ENCODE measurements at regions of chr12 and their contacts with region 1.

Region 1: GRCh38 chr12:99800605-99801004 is 153.1 kb downstream of the GARIN6 start:
- DNase-seq: no peak
- H3K4me3 ChIP-seq: no peak overlapping the region
- H3K4me3 Mint-ChIP-seq: no peak overlapping the region
- H3K27ac Mint-ChIP-seq: no peak overlapping the region
- H3K4me1 ChIP-seq: no peaks in the 10 kb centered on the region
- H3K4me1 Mint-ChIP-seq: no peaks in the 10 kb centered on the region
- H3K27me3 ChIP-seq: no peaks in the 10 kb centered on the region
- H3K27me3 Mint-ChIP-seq: peaks cover 9% of the 10 kb centered on the region
- CTCF ChIP-seq: no peak

Region 2: DNA sequence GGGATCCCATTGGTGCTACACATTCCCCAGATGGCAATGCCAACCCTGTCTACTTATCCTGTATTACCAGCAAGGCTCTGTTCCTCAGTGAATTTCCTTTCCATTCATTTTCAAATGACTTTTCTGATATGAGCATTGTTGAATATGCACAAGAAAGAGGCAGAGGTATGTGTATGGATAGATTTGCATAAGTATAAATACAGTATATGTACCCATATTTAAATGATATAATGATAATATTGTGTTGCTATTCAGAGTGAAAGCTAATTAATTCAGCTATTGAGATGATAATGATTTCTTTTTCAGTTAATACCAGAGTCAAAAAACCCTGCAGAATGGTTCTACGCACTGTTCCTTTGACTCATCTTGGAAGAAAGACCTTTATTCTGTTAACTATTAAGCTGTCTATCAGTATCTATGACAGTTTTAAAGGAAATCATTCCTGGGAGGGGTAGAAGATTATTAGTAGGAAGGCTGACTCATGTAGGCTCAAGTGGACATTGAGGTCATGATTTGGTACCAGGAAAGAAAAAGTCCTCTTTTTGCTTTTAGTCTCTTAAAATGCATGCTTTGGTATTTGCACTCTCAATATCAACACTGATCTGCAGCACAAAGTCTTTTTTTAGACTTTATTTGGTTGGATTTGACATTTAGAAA is 728.0 kb after region 1 on chr12:
- CTCF ChIA-PET with region 1: interaction called, 11 read pairs
- POLR2A ChIA-PET with region 1: no interaction called
- intact Hi-C with region 1: no loop called
- DNase-seq: no peak
- H3K4me3 ChIP-seq: no peak overlapping the region
- H3K4me3 Mint-ChIP-seq: no peak overlapping the region
- H3K27ac Mint-ChIP-seq: no peak overlapping the region
- H3K4me1 ChIP-seq: no peaks in the 10 kb centered on the region
- H3K4me1 Mint-ChIP-seq: no peaks in the 10 kb centered on the region
- H3K27me3 ChIP-seq: no peaks in the 10 kb centered on the region
- H3K27me3 Mint-ChIP-seq: peaks cover 21% of the 10 kb centered on the region
- CTCF ChIP-seq: no peak